Activated CD4-positive, alpha-beta T cell treated with anti-CD3 and anti-CD28 coated beads for 36 hours (primary cell): ENCODE measurements at regions of chr12 and their contacts with region 1.

Region 1: DNA sequence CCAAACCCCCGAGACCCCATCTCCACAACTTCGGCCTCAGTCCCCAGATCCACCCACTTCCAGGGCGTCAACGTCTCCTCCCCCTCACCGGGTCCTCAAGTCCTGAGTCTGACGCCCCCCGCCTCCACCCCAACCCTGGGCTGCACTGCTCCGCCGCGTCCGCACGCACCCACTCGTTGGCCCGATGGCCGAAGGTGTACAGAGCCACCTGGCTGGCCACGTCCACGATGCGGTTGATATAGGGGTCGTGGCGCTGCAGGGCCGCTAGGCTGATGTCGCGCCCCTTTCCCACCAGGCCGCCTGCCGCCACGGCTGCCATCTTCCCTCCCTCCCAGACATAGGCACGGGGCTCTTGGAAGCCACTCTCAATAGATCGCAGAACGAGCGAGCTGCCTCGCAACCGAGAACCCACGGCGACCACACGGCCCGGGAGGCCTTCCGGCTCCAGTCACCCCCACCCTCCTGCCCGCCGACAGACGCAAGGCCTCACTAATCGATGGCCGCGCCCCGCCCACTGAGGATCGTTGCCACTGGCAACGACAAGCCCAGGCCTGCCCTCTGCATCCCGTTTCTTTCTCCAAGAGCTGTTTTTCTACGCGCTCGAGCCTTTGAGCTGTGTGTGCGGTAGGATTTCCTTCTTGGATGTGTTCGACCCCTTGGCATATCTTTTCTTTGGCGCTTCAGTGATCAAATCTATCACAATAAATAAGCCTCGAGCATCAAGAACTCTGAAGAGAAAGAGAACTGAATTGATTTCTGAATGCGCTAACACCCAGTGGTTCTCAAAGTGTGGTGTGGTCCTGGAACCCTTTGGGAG is at the start of gene DCP1B:
- DNase-seq: peak; percentile 98
- ATAC-seq: peak; percentile 100
- H3K4me3 Mint-ChIP-seq: peak within 1 kb of the TSS; percentile 95
- H3K27ac Mint-ChIP-seq: peak within 1 kb of the TSS; percentile 99
- H3K4me1 Mint-ChIP-seq: peaks cover 25% of the 10 kb centered on the region
- H3K27me3 Mint-ChIP-seq: no peaks in the 10 kb centered on the region
- total RNA-seq, gene DCP1B: 14.5 to 16.1 TPM

Region 2: DNA sequence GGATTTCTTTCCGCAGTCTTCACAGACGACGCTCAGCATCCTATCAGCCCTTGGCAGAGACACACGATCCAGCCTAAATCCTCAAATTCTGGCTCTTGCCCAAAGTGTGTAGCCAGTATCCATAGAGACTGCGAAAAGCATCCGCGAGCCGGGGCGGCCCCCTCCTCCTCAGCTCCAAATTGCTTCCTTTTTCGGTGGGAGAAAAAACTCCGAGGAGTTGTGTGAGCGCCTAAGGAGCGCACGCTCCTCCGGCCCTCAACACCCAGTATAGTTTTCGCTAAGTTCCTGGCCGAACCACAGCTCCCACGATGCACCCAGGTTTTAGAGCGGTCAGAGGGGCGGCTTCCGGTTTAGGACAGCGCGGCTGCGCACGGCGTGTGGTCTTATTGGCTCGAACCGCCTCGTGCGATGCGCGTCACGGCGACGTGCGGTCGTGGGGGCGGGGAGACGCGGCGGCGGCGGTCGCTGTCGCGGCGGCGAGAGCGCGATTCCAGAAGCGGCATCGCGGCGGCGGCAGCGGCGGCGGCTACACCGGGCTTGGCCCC is 313.7 kb before region 1 on chr12 and contains the start of gene ADIPOR2:
- CTCF ChIA-PET with region 1: no interaction called
- POLR2A ChIA-PET with region 1: no interaction called
- intact Hi-C with region 1: loop called in 1 of 2 experiments (anchors 1 kb)
- DNase-seq: peak; percentile 96
- ATAC-seq: peak; percentile 99
- H3K4me3 Mint-ChIP-seq: peak within 1 kb of the TSS; percentile 95
- H3K27ac Mint-ChIP-seq: peak within 1 kb of the TSS; percentile 97
- H3K4me1 Mint-ChIP-seq: peaks cover 47% of the 10 kb centered on the region
- H3K27me3 Mint-ChIP-seq: peaks cover 3% of the 10 kb centered on the region
- total RNA-seq, gene ADIPOR2: 51.7 to 52.6 TPM

Region 3: DNA sequence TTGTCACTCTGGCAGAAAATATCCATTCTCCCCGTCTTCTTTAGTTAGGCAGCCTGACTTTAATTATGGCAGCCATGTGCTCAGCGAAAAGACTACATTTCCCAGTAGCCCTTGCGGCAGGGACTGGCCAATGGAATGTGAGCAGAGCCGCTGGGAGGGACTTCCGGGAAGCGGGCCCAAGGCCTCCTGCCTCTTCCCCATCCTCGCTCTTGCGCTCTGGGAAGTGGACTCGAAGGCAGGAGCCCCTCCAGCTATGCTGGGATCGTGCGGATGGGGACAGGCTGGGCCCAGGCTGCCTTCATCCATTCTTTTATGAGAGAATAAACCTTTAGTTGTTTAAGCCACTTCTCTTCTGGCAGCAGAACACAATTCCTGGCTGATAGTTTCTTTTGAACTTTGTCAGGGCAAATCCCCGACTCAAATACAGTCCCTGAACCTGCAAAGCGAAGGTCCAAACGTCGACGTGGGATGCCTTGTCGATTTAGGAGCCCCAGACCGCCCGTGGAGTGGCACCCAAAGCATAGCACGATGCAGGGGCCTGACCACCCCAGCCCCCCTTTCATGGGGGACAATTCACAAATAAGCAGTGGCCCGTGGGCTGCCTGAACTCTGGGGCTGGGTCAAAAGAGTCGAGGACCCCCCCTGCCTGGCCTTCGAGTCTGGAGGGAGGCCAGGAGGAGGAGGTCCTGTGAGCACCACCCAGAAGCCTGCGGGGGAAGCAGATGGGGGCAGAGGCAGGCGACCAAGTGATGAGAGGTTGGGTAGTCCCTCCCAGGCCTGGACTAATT is 199.6 kb before region 1 on chr12:
- CTCF ChIA-PET with region 1: no interaction called
- POLR2A ChIA-PET with region 1: no interaction called
- intact Hi-C with region 1: loop called in 1 of 2 experiments (anchors 1 kb)
- DNase-seq: peak; percentile 93
- ATAC-seq: peak; percentile 99
- H3K4me3 Mint-ChIP-seq: no peak overlapping the region
- H3K27ac Mint-ChIP-seq: peak overlapping the region; percentile 79
- H3K4me1 Mint-ChIP-seq: peaks cover 9% of the 10 kb centered on the region
- H3K27me3 Mint-ChIP-seq: no peaks in the 10 kb centered on the region

Region 4: GRCh38 chr12:1993341-1993740 is 11.0 kb before region 1 on chr12:
- CTCF ChIA-PET with region 1: interaction called, 4 read pairs
- POLR2A ChIA-PET with region 1: interaction called, 3 read pairs
- intact Hi-C with region 1: loop called in 1 of 2 experiments (anchors 1 kb)
- DNase-seq: no peak
- ATAC-seq: peak; percentile 71
- H3K4me3 Mint-ChIP-seq: no peak overlapping the region
- H3K27ac Mint-ChIP-seq: no peak overlapping the region
- H3K4me1 Mint-ChIP-seq: peaks cover 34% of the 10 kb centered on the region
- H3K27me3 Mint-ChIP-seq: no peaks in the 10 kb centered on the region

Region 5: GRCh38 chr12:2034633-2035430 is 30.5 kb after region 1 on chr12:
- CTCF ChIA-PET with region 1: interaction called, 7 read pairs
- POLR2A ChIA-PET with region 1: interaction called, 6 read pairs
- intact Hi-C with region 1: loop called in 1 of 2 experiments (anchors 1 kb)
- DNase-seq: peak; percentile 93
- ATAC-seq: peak; percentile 100
- H3K4me3 Mint-ChIP-seq: peak overlapping the region; percentile 63
- H3K27ac Mint-ChIP-seq: no peak overlapping the region
- H3K4me1 Mint-ChIP-seq: peaks cover 12% of the 10 kb centered on the region
- H3K27me3 Mint-ChIP-seq: peaks cover 26% of the 10 kb centered on the region

Region 6: DNA sequence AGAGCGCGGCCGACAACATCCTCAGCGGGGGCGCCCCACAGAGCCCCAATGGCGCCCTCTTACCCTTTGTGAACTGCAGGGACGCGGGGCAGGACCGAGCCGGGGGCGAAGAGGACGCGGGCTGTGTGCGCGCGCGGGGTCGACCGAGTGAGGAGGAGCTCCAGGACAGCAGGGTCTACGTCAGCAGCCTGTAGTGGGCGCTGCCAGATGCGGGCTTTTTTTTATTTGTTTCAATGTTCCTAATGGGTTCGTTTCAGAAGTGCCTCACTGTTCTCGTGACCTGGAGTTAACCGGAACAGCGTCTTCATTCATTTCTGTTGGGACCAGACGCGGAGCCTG is 686.7 kb after region 1 on chr12:
- CTCF ChIA-PET with region 1: no interaction called
- POLR2A ChIA-PET with region 1: no interaction called
- intact Hi-C with region 1: loop called in 1 of 2 experiments (anchors 2 kb)
- DNase-seq: peak; percentile 76
- ATAC-seq: peak; percentile 66
- H3K4me3 Mint-ChIP-seq: peak overlapping the region; percentile 79
- H3K27ac Mint-ChIP-seq: peak overlapping the region; percentile 79
- H3K4me1 Mint-ChIP-seq: peaks cover 26% of the 10 kb centered on the region
- H3K27me3 Mint-ChIP-seq: peaks cover 5% of the 10 kb centered on the region